Activated CD4-positive, alpha-beta memory T cell treated with anti-CD3 and anti-CD28 coated beads, Interleukin-2, amount 10 ng/mL, durations not matched to agents 7 days and 5 days (primary cell): ENCODE measurements at regions of chr22 and their contacts with region 1.

Region 1: GRCh38 chr22:22235558-22235957 is 9.0 kb upstream of the VPREB1 start:
- DNase-seq: peak; percentile 71
- H3K4me3 Mint-ChIP-seq: no peak overlapping the region
- H3K27ac Mint-ChIP-seq: no peak overlapping the region
- H3K4me1 Mint-ChIP-seq: peaks cover 15% of the 10 kb centered on the region
- H3K27me3 Mint-ChIP-seq: peaks cover 4% of the 10 kb centered on the region

Region 2: GRCh38 chr22:21938071-21938822 is 297.3 kb before region 1 on chr22:
- CTCF ChIA-PET with region 1: no interaction called
- POLR2A ChIA-PET with region 1: no interaction called
- DNase-seq: peak; percentile 89
- H3K4me3 Mint-ChIP-seq: peak overlapping the region; percentile 66
- H3K27ac Mint-ChIP-seq: peak overlapping the region; percentile 3
- H3K4me1 Mint-ChIP-seq: peaks cover 51% of the 10 kb centered on the region
- H3K27me3 Mint-ChIP-seq: no peaks in the 10 kb centered on the region

Region 3: DNA sequence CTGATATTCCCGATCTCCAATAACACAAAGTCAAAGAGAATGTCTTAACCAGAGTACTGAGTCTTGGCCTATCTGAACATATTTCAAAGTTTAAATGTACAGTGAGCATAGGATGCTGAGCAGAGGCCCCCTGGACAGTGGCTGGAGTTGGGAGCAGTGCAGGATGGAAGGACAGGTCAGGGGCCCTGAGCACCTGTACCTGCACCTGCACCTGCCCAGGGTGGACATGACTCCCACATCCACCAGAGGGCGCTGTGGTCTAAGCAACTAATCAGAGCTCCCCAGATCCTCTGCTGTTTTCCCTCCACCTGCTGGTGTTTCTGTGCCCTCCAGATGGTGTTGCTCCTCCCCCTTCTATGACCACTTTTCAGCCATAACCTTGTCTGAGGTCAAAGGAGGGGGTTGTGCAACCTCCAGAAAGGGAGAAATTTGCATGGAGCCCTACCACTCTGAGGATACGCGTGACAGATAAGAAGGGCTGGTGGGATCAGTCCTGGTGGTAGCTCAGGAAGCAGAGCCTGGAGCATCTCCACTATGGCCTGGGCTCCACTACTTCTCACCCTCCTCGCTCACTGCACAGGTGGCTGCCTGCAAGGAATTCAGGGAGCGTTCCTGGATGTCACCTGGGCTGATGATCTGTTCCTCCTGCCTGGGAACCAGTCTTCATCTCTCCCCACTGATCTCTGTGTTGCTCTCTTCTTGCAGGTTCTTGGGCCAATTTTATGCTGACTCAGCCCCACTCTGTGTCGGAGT is 40.1 kb before region 1 on chr22:
- CTCF ChIA-PET with region 1: interaction called, 19 read pairs
- POLR2A ChIA-PET with region 1: no interaction called
- DNase-seq: peak; percentile 82
- H3K4me3 Mint-ChIP-seq: no peak overlapping the region
- H3K27ac Mint-ChIP-seq: no peak overlapping the region
- H3K4me1 Mint-ChIP-seq: no peaks in the 10 kb centered on the region
- H3K27me3 Mint-ChIP-seq: peaks cover 35% of the 10 kb centered on the region

Region 4: DNA sequence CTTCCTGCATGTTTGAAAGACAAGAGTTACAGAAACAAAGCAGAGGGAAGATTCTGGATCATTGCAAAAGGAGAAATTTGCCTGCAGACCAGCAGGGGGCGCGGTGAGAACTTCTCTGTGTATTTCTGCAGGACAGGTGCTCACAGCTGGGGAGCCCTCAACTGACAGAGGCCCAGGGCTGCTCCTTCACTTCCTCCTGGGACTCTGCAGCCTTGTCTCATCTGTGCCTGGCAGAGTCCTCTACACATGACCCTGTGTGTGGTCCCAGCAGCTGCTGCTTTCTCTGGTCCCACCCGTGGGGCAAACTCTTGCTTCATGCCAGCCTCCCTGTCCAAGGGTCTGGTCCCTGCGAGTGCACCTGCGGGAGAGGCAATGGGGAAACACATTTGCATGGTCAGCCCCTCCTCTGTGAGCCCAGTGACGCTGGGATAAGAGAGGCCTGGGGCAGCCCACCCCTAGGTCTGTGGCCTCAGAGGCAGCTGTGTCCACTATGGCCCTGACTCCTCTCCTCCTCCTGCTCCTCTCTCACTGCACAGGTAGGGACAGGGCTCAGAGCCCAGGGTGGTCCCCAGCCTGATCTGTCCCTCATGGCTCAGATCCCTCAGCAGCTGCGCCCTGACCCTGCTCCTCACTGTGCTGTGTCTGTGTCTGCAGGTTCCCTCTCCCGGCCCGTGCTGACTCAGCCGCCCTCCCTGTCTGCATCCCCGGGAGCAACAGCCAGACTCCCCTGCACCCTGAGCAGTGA is 34.2 kb before region 1 on chr22:
- CTCF ChIA-PET with region 1: interaction called, 153 read pairs
- POLR2A ChIA-PET with region 1: interaction called, 15 read pairs
- DNase-seq: peak; percentile 73
- H3K4me3 Mint-ChIP-seq: no peak overlapping the region
- H3K27ac Mint-ChIP-seq: no peak overlapping the region
- H3K4me1 Mint-ChIP-seq: peaks cover 5% of the 10 kb centered on the region
- H3K27me3 Mint-ChIP-seq: peaks cover 15% of the 10 kb centered on the region

Region 5: DNA sequence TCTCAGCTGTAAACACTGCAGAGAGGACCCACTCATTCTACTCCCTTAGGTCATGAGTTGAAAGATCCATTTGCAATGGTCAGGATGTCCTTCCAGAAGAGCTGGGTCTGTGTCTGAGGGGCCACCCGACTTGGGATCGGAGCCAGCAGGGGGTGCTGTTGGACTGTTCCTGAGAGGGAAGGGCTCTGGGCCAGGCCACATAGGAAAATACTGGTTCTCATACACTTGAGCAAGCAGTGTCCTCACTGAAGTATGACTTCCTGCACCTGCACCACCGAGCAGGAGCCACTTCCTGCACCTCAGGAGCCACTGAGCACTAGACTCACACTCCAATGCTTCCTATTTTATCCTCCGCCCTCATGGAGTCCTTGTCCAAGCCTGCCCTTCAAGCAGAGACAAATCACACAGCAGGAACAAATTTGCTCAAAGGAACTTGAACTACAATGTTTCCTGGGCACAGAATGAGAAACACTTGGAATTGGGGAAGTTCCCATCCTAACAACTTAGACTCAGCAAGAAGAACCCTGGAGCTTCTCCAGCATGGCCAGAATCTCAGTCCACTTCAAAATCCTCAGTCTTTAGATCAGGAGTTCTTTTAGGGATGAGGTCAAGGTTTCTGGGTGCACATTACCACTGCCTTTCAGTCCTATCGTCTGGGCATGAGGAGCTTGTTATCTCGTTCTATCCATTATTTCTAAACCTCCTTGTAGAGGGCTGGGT is 27.6 kb before region 1 on chr22:
- CTCF ChIA-PET with region 1: interaction called, 153 read pairs
- POLR2A ChIA-PET with region 1: interaction called, 15 read pairs
- DNase-seq: peak; percentile 89
- H3K4me3 Mint-ChIP-seq: peak overlapping the region; percentile 12
- H3K27ac Mint-ChIP-seq: peak overlapping the region; percentile 66
- H3K4me1 Mint-ChIP-seq: peaks cover 42% of the 10 kb centered on the region
- H3K27me3 Mint-ChIP-seq: no peaks in the 10 kb centered on the region

Region 6: GRCh38 chr22:22213231-22213630 is 22.3 kb before region 1 on chr22:
- CTCF ChIA-PET with region 1: interaction called, 153 read pairs
- POLR2A ChIA-PET with region 1: interaction called, 15 read pairs
- DNase-seq: no peak
- H3K4me3 Mint-ChIP-seq: no peak overlapping the region
- H3K27ac Mint-ChIP-seq: no peak overlapping the region
- H3K4me1 Mint-ChIP-seq: peaks cover 39% of the 10 kb centered on the region
- H3K27me3 Mint-ChIP-seq: no peaks in the 10 kb centered on the region